ENCODE measurements at regions of chr19 and their contacts with region 1.

Region 1: DNA sequence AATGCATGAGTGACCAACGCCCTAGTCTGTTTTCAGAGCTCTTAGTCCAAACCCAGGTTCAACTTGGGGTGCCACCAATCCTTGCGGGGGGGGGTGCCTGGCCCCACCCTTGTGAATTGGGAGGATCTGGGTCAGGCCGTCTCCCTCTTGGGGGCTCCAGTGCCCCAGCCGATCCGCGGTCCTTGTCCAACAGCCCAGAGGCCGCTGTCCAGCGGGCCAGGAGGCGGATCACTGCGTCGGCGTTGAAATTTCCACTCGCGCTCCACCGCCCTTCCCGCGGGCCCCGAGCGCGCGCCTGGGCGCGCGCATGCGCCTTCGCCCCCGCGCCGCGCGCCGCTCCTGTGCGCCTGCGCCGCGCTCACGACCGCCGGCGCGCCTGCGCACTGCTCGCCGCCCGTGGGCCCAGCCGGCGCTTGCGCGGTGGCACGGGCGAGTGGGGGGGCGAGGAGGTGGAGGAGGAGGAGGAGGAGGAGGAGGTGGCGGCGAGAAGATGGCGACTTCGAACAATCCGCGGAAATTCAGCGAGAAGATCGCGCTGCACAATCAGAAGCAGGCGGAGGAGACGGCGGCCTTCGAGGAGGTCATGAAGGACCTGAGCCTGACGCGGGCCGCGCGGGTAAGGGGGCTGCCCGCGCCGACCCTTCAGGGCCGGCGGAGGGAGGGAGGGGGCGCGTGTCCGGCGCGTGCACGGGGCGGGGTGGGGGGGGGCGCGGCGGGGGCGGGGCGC is at the start of gene CRTC1:
- DNase-seq: peak; percentile 96
- ATAC-seq: peak; percentile 87
- H3K4me3 Mint-ChIP-seq: peak within 1 kb of the TSS; percentile 92
- H3K27ac Mint-ChIP-seq: peak within 1 kb of the TSS; percentile 95
- H3K4me1 Mint-ChIP-seq: peaks cover 31% of the 10 kb centered on the region
- H3K27me3 Mint-ChIP-seq: no peaks in the 10 kb centered on the region
- CTCF ChIP-seq: no peak
- total RNA-seq, gene CRTC1: 13.1 and 15.5 TPM in 2 replicates

Region 2: GRCh38 chr19:18700501-18701249 is 17.3 kb after region 1 on chr19:
- CTCF ChIA-PET with region 1: no interaction called
- POLR2A ChIA-PET with region 1: interaction called, 8 read pairs
- intact Hi-C with region 1: loop called (anchors 1 kb)
- DNase-seq: peak; percentile 63
- ATAC-seq: peak; percentile 87
- H3K4me3 Mint-ChIP-seq: peak overlapping the region; percentile 85
- H3K27ac Mint-ChIP-seq: peak overlapping the region; percentile 95
- H3K4me1 Mint-ChIP-seq: peaks cover 46% of the 10 kb centered on the region
- H3K27me3 Mint-ChIP-seq: no peaks in the 10 kb centered on the region
- CTCF ChIP-seq: no peak

Region 3: DNA sequence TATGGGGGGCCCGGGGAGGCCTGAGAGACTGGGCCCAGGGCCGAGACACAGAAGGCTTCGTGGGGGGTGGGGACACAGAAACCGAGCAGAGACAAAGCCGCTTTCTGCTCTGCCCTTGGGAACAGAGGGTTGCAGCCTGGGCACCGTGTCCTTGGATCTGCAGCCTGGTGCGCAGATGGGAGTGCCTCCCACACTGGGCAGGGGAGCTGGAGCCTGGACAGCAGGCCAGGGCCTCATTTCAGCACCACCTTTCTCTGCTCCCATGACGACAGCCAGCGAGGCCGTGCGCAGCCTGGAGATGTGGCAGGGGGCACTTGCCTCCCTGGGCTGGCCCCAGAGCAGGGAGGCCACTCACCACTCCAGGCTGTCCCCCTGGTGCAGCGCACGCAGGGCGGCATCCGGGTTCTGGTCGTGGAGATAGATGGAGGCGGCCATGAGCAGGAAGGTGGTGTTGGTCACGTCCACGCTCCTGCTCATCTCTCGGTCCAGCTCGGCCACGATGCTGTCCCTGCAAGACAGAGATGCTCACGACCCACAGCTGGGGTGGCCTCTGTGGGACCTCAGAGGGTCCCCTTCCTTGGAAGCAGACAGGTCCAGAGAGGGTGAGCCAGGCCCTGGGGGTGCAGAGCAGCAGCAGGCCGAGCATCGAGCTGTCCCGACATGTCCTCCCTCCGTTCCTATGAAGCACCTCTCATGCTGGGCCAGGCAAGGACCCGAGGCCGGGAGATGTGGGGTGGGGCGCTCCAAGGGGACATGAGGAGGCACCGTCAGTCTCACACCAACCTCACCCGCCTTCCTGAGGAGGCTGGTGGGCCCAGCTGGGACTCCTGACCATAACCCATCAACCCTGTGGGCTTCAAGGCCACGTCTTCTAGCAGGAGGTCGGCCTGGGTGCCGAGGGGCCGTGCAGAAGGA is 223.5 kb after region 1 on chr19:
- CTCF ChIA-PET with region 1: no interaction called
- POLR2A ChIA-PET with region 1: no interaction called
- intact Hi-C with region 1: no loop called
- DNase-seq: no peak
- ATAC-seq: no peak
- H3K4me3 Mint-ChIP-seq: no peak overlapping the region
- H3K27ac Mint-ChIP-seq: no peak overlapping the region
- H3K4me1 Mint-ChIP-seq: no peaks in the 10 kb centered on the region
- H3K27me3 Mint-ChIP-seq: no peaks in the 10 kb centered on the region
- CTCF ChIP-seq: no peak